Activated CD4-positive, alpha-beta T cell treated with anti-CD3 and anti-CD28 coated beads for 36 hours (primary cell): ENCODE measurements at regions of chr7 and their contacts with region 1.

Region 1: DNA sequence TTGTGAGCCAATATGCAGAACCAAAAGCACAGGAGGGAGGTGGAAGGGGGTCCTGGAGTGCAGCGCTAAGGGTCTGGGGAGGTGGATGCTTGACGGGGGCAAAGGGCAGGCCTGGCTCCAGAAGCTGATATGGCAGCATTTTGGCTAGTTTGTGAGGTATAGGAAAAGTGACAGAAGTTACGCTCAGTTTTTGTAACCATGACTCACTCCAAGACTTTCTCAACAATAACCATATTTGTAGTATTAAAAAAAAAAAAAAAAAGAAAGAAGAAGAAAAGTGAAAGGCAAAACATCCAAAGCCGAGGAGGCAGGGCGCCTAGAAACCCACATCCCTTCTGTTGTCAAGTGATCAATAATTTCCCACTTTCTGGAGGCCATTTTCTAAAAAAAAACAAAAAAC is 92.3 kb downstream of the RNF216 start:
- DNase-seq: peak; percentile 83
- ATAC-seq: peak; percentile 65
- H3K4me3 Mint-ChIP-seq: peak overlapping the region; percentile 51
- H3K27ac Mint-ChIP-seq: peak overlapping the region; percentile 95
- H3K4me1 Mint-ChIP-seq: peaks cover 90% of the 10 kb centered on the region
- H3K27me3 Mint-ChIP-seq: no peaks in the 10 kb centered on the region

Region 2: DNA sequence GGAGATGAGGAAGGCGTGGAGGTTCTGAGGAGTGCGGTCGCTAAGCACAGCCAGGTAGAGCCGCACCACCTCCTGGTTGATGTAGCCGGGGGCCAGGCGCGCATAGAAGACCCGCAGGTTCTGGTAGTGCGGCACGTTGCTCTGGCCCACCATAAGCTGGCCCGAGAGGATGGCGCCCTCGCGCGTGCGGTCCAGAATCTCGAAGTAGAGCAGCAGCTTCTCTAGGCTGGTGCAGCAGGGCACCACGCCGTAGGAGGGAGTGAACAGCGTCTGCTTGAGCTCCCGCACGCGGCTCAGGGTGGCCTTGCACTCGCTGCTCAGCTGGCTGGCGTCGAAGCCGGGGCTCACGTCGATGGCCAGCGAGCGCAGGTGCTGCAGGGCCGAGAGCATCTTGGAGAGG is 187.7 kb before region 1 on chr7:
- CTCF ChIA-PET with region 1: no interaction called
- POLR2A ChIA-PET with region 1: no interaction called
- intact Hi-C with region 1: no loop called
- DNase-seq: no peak
- ATAC-seq: no peak
- H3K4me3 Mint-ChIP-seq: no peak overlapping the region
- H3K27ac Mint-ChIP-seq: no peak overlapping the region
- H3K4me1 Mint-ChIP-seq: peaks cover 12% of the 10 kb centered on the region
- H3K27me3 Mint-ChIP-seq: no peaks in the 10 kb centered on the region

Region 3: GRCh38 chr7:5677538-5678294 is 11.4 kb before region 1 on chr7:
- CTCF ChIA-PET with region 1: interaction called, 26 read pairs
- POLR2A ChIA-PET with region 1: no interaction called
- intact Hi-C with region 1: no loop called
- DNase-seq: peak; percentile 73
- ATAC-seq: peak; percentile 63
- H3K4me3 Mint-ChIP-seq: no peak overlapping the region
- H3K27ac Mint-ChIP-seq: peak overlapping the region; percentile 27
- H3K4me1 Mint-ChIP-seq: peaks cover 44% of the 10 kb centered on the region
- H3K27me3 Mint-ChIP-seq: no peaks in the 10 kb centered on the region

Region 4: DNA sequence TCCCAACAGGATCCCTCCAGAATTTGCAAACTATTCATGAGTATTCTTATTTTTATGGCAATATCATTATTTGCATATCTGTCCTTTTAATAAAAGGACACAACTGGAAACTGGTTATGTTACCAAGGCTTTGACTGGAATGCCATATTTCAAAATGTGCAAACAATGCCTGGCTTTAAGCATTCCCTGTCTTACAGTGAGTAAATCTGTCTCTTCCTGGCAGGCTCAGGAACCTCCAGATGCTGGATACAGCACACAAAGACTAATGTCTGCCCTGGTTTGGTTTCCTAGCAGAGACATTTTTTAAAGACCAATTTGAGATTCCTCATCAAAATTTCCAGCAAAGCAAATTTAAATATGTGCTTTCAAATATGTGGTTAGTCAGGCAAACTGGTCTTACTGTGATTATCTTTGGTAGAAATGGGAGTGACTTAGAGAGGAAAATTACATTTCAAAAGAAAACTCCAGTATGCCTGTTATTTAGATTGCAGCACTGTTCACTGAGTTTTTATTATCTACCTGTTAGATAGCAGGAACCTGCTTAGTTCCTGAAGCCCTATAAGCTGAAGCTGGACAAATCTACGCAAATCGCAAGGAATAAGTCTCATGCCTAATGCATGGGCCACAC is 61.0 kb after region 1 on chr7:
- CTCF ChIA-PET with region 1: no interaction called
- POLR2A ChIA-PET with region 1: no interaction called
- intact Hi-C with region 1: no loop called
- DNase-seq: no peak
- ATAC-seq: no peak
- H3K4me3 Mint-ChIP-seq: no peak overlapping the region
- H3K27ac Mint-ChIP-seq: no peak overlapping the region
- H3K4me1 Mint-ChIP-seq: peaks cover 2% of the 10 kb centered on the region
- H3K27me3 Mint-ChIP-seq: no peaks in the 10 kb centered on the region